Ovary (tissue), 10 donors: ENCODE measurements at regions of chr3 and their contacts with region 1.

Region 1: GRCh38 chr3:141105828-141106628 is 54.9 kb downstream of the SPSB4 start:
- DNase-seq: peak in 3 of 5 donors; percentile 48 to 80 (median 71)
- H3K4me3 ChIP-seq: no peak overlapping the region
- H3K27ac ChIP-seq: no peak overlapping the region
- H3K4me1 ChIP-seq: no peaks in the 10 kb centered on the region
- H3K27me3 ChIP-seq: no peaks in the 10 kb centered on the region
- CTCF ChIP-seq: peak in 2 of 3 donors; percentile 64 to 70
- EP300 ChIP-seq: no peak
- POLR2A ChIP-seq: no peak

Region 2: GRCh38 chr3:141011232-141011996 is 94.6 kb before region 1 on chr3:
- intact Hi-C with region 1: loop called (anchors 5 to 10 kb)
- DNase-seq: peak; percentile 54 to 85 (median 74)
- H3K4me3 ChIP-seq: no peak overlapping the region
- H3K27ac ChIP-seq: no peak overlapping the region
- H3K4me1 ChIP-seq: peaks cover 2% of the 10 kb centered on the region
- H3K27me3 ChIP-seq: no peaks in the 10 kb centered on the region
- CTCF ChIP-seq: peak; percentile 48 to 63 (median 52)
- EP300 ChIP-seq: no peak
- POLR2A ChIP-seq: no peak

Region 3: GRCh38 chr3:141030296-141030695 is 75.7 kb before region 1 on chr3:
- intact Hi-C with region 1: no loop called
- DNase-seq: no peak
- H3K4me3 ChIP-seq: no peak overlapping the region
- H3K27ac ChIP-seq: no peak overlapping the region
- H3K4me1 ChIP-seq: no peaks in the 10 kb centered on the region
- H3K27me3 ChIP-seq: no peaks in the 10 kb centered on the region
- CTCF ChIP-seq: no peak
- EP300 ChIP-seq: no peak
- POLR2A ChIP-seq: no peak

Region 4: DNA sequence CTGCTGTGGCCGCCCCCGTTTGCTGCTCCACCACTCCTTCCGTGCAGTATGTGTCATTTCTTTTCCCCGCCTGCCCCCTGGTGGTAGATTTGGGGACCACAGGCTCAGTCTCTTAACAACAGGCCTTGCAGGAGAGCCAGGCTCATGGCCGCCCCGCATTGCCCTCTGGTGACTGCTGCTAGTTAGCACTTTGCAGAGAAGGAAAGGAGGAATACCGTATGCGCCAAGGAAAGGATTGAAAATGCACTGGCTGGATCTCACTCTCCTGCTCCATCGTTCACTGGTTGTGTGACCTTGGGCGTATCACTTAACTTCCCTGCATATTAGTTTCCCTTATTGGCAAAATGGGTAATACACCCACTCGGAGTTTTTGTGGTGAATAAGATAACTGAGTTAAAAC is 86.3 kb after region 1 on chr3:
- intact Hi-C with region 1: loop called in 2 of 4 experiments (anchors 10 kb)
- DNase-seq: peak; percentile 92 to 99 (median 97)
- H3K4me3 ChIP-seq: no peak overlapping the region
- H3K27ac ChIP-seq: no peak overlapping the region
- H3K4me1 ChIP-seq: no peaks in the 10 kb centered on the region
- H3K27me3 ChIP-seq: no peaks in the 10 kb centered on the region
- CTCF ChIP-seq: peak; percentile 83 to 98 (median 98)
- EP300 ChIP-seq: no peak
- POLR2A ChIP-seq: no peak

Region 5: DNA sequence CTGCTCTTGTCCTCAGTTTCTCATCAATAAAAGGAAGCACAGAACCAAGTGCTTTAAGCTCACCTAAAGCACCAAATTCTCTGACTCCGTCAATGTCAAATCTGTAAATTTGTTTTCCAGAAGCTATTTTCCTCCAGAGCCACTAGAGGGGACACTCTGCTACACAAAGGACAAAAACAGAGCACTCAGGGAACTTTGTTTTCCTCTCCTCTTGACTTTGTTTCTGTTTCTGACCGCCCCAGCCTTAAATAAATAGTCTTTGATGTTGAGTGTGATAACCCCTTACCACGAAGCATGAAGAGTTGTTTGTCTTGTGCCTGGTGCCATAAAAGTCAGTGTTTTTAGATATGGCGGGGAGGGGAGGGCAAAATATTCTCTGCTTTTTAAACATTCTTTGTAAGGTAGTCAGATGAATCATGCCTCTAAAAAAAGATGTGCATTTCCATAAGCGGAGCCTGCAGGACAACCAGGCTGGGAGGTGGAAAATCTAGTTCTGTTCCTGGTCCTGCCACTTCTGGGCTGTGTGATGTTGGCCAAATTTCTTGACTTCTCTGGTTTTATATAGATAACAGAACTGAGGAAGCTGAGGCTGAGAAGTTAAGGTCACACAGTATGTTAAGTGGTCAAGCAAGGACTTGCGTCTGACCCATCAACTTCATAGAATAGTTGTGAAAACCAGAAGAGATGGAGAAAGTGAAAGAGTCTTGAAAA is 255.0 kb after region 1 on chr3:
- intact Hi-C with region 1: no loop called
- DNase-seq: peak in 1 of 5 donors; percentile 31
- H3K4me3 ChIP-seq: no peak overlapping the region
- H3K27ac ChIP-seq: no peak overlapping the region
- H3K4me1 ChIP-seq: peaks cover 2% of the 10 kb centered on the region
- H3K27me3 ChIP-seq: no peaks in the 10 kb centered on the region
- CTCF ChIP-seq: peak; percentile 62 to 85 (median 80)
- EP300 ChIP-seq: no peak
- POLR2A ChIP-seq: no peak

Region 6: DNA sequence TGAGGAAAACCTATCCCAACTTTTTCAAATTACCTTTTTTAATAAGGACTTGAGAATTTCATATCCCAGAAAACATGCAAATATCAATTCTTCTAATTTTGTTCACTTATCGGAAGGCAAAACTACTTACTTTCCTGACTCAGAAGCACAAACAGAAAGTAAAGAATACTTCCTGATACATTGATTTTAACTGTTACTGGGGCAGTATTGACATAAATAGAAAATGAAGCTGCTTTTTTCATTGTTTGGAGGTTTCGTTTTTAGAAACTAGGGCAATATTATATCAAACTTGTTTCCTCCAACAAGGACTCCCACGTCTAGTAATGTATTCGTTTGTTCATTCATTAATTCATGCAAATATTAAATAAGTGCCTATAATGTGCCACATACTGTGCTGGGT is 1838.3 kb after region 1 on chr3:
- intact Hi-C with region 1: loop called in 1 of 4 experiments (anchors 5 kb)
- DNase-seq: no peak
- H3K4me3 ChIP-seq: no peak overlapping the region
- H3K27ac ChIP-seq: no peak overlapping the region
- H3K4me1 ChIP-seq: no peaks in the 10 kb centered on the region
- H3K27me3 ChIP-seq: no peaks in the 10 kb centered on the region
- CTCF ChIP-seq: no peak
- EP300 ChIP-seq: no peak
- POLR2A ChIP-seq: no peak